WTC11 (cell line): ENCODE measurements at regions of chr5 and their contacts with region 1.

Region 1: DNA sequence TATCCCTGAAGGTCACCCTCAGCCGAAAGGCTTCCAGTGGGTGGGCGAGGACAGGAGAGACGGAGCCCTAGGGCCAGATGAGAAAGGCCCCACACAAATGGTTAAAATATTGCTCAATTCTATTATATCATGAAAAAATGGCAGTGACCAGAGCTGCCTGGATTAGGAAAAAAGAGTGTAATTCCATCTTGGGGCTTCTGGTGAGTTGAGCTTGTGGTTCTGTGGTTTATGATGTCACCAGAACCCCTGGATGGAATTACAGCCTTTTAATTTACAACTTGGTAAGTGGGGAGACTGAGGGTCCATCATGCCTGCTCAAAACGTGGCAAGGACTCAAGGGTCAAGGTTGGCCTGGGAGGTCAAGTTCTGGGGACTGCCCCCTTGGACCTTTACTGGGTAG is 55.5 kb upstream of the STC2 start:
- DNase-seq: no peak
- ATAC-seq: no peak
- H3K4me3 Mint-ChIP-seq: no peak overlapping the region
- H3K27ac Mint-ChIP-seq: no peak overlapping the region
- H3K4me1 Mint-ChIP-seq: no peaks in the 10 kb centered on the region
- H3K27me3 Mint-ChIP-seq: peaks cover 19% of the 10 kb centered on the region
- CTCF ChIP-seq: no peak

Region 2: DNA sequence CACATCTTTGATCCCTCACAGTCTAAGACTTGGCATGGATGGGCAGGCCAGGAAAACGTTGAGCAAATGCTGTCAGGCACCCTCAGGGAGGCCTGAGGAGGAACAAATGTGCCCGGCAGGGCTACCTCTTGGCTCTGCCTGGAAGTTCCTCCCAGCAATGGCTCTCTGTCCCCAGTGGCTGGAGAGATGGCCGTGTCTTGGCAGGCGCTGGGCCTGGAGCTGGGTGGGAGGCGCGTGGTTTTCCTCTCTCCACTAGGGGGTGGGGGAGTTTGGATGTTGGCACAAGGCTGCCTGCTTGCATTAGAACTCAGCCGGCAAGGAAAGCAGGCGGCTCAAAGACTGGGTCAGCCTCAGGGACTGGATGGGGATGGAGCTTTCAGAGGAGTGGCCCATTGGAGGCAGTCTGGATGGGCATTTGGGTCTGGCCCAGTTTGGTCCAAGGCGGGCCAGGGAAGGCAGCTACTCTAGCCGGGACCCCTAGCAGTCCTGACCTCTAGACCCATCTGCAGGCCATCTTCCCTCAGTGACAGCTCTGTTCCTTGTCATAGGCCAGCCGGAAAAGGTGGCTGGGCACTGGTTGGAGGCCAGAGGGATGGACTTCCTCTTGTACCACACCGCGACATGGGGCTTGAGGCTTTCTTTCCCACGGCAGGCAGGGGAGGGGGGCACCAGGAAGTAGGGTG is 12.7 kb after region 1 on chr5:
- CTCF ChIA-PET with region 1: interaction called, 11 read pairs
- POLR2A ChIA-PET with region 1: no interaction called
- DNase-seq: peak; percentile 73
- ATAC-seq: peak; percentile 96
- H3K4me3 Mint-ChIP-seq: no peak overlapping the region
- H3K27ac Mint-ChIP-seq: no peak overlapping the region
- H3K4me1 Mint-ChIP-seq: 0 out of 2 replicates have a peak, but pooled peaks cover 3% of the 10 kb centered on the region
- H3K27me3 Mint-ChIP-seq: peaks cover 5% of the 10 kb centered on the region
- CTCF ChIP-seq: no peak; the same call in 1 of the 2 replicates